Activated CD8-positive, alpha-beta memory T cell treated with anti-CD3 and anti-CD28 coated beads, Interleukin-2, amount 10 ng/mL, durations not matched to agents 7 days and 5 days (primary cell): ENCODE measurements at regions of chr11 and their contacts with region 1.

Region 1: DNA sequence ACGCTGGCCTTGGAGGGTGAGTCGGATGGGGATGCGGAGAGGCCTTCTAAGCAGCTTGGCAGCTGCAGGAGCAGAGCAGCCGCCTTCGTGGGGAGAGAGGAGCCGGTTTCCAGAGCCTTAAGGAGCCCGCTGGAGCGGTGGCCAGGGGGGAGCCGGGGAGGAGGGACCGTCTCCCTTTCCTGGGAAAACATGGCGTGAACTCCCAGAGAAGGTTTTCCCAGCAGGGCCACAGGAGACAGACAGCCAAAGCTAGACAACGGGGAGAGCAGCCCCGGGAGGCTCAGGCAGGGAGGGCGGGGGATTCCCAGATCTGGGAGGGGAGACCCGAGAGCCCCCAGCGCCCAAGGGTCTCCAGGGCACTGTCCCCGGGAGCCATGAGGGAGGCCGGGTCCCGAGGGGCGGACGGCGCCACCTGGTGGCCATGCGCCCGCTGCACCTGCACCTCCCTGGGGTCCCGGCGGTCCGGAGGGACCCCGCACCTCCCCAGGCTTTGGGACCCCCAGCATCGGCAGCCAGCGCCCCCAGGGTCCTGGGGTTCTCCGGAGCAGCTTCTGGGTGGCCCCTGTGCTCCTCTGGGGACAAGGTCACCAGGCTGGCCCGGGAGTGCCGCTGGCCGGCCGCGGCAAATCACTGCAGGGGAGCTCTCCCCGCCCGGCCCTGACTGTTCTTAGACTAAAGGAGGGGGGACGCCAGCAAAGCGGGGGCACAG is 2.4 kb upstream of the SYT8 start:
- DNase-seq: peak; percentile 71
- ATAC-seq: peak; percentile 83
- H3K4me3 Mint-ChIP-seq: no peak overlapping the region
- H3K27ac Mint-ChIP-seq: no peak overlapping the region
- H3K4me1 Mint-ChIP-seq: peaks cover 2% of the 10 kb centered on the region
- H3K27me3 Mint-ChIP-seq: peaks cover 9% of the 10 kb centered on the region

Region 2: DNA sequence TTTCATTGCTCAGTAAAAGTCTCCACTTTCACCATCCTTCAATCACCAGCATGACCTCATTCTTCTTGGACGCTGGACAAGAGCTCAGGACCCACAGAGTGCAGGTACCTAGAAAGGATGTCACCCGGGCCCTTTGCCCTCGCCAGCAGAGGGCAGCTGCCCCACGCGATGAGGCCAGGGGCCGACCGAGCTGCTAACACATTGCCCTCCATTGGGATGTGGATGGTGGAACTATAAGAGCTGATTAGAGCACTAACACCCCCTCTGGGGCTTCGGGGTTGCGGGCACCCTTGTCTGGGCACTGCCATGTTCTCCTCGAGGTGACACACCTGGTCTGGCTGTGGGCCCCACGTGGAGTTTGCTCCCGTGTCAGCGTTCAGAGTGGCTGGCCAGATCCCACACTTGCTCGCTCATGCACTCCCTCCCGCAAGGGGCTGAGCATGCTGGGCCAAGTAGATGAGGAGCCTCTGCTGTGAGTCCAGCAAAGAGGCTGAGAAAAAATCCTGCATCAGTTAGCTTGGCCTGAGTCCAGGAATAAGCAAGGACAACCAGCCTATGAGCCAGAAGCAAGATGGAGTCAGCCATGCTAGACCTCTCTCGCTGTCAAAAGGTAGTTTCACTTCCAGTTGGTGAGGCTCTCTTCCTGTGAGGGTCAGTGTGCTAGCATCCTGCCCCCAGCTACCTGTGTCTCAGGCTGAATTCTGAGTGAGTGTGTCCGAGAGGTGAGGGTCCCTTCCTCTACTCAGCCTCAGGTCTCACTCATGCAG is 125.5 kb before region 1 on chr11:
- CTCF ChIA-PET with region 1: interaction called, 55 read pairs
- DNase-seq: peak; percentile 48
- ATAC-seq: peak; percentile 39
- H3K4me3 Mint-ChIP-seq: no peak overlapping the region
- H3K27ac Mint-ChIP-seq: no peak overlapping the region
- H3K4me1 Mint-ChIP-seq: peaks cover 29% of the 10 kb centered on the region
- H3K27me3 Mint-ChIP-seq: peaks cover 40% of the 10 kb centered on the region

Region 3: GRCh38 chr11:1757861-1758610 is 74.3 kb before region 1 on chr11:
- CTCF ChIA-PET with region 1: interaction called, 14 read pairs
- DNase-seq: peak; percentile 89
- ATAC-seq: peak; percentile 83
- H3K4me3 Mint-ChIP-seq: peak overlapping the region; percentile 67
- H3K27ac Mint-ChIP-seq: peak overlapping the region; percentile 94
- H3K4me1 Mint-ChIP-seq: peaks cover 67% of the 10 kb centered on the region
- H3K27me3 Mint-ChIP-seq: no peaks in the 10 kb centered on the region

Region 4: DNA sequence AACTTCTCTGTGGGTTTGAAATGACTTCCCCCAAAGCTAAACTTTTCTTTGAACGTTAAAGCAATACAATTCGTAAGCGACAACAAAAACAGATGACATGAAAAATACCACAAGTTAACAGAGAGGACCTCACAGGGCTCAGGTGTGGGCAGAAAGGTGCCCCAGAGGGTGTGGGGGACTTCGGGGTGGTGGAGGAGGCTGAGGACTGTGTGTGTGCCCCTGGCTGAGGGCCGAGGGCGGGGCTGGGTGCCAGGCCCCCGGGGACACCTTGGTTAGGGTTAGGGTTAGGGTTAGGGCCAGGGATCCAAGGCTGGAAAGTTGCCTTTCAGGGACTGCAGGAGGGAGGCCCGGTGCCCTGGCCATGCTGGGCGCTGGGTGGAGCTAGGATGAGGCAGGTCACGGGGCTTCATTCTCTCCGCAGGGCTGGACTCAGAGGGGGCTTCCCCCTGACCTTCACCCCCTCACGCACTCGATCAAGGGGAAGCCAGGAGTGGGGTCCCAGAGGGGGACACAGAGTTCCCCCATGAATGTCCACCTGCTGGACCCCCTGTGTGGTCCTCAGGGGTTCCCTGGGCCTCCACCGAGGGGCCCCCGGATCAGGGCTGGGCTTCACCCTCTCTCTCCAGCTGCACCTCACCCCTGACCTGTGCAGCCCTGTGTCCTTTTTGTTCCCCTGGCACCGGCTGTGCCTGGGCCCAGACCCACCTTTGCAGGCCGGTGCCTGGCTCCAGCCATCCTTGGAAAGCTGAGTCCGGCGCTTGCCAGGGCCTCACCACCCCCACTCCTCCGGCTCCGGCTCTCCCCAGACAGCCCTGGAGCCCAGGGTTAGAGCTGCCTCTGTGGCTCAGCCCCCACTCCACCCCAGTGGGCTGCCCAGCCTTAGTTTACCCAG is 13.4 kb after region 1 on chr11:
- CTCF ChIA-PET with region 1: interaction called, 23 read pairs
- DNase-seq: no peak
- ATAC-seq: peak; percentile 12
- H3K4me3 Mint-ChIP-seq: peak overlapping the region; percentile 51
- H3K27ac Mint-ChIP-seq: peak overlapping the region; percentile 90
- H3K4me1 Mint-ChIP-seq: peaks cover 55% of the 10 kb centered on the region
- H3K27me3 Mint-ChIP-seq: no peaks in the 10 kb centered on the region

Region 5: GRCh38 chr11:1917671-1918516 is 85.5 kb after region 1 on chr11:
- CTCF ChIA-PET with region 1: interaction called, 12 read pairs
- DNase-seq: no peak
- ATAC-seq: no peak
- H3K4me3 Mint-ChIP-seq: no peak overlapping the region
- H3K27ac Mint-ChIP-seq: no peak overlapping the region
- H3K4me1 Mint-ChIP-seq: peaks cover 12% of the 10 kb centered on the region
- H3K27me3 Mint-ChIP-seq: peaks cover 4% of the 10 kb centered on the region